ENCODE measurements at regions of chr17 and their contacts with region 1.

Region 1: DNA sequence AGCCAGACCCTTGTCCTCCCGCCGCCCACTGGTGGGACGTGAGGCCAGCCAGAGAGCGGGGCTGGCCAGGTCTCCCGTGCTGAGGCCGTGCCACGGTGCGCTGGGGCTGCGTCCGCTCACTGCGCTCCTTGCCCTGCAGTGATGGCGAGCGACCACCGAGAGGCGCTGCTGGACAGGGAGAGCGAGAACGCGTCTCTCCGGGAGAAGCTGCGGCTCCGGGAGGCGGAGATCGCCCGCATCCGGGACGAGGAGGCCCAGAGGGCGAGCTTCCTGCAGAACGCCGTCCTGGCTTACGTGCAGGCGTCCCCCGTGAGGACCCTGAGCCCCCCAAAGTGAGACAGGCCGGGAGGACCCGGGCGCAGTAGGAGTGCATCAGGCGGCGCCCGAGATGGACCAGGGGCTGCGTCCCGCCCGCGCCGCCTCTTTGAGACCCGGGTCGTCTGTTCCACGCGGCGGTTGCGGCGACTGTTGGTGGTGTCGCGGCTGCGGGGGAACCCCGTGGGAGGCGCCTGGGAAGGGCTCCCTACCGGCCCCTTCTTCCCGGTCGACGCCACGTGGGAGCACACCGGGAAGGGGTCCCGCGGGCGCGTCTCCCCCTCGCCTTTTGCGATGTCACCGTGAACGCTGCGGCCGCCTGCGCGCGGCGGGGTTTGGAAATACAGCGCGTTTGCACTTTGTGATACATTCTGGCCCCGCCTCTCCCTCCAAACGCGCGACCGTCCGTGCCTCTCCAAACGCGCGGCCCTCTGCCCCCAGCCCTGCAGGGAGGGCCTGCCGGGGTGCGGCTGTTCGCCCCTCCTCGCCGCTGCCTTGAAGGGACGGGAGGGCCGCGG is 792 bp upstream of the RAC3 start:
- DNase-seq: peak; percentile 48 to 92 (median 84)

Region 2: GRCh38 chr17:82153745-82154375 is 123.2 kb after region 1 on chr17:
- intact Hi-C with region 1: loop called (anchors 1 kb)
- DNase-seq: peak; percentile 57 to 92 (median 80)

Measured in head of caudate nucleus (tissue), 42 donors.